ENCODE measurements at regions of chr10 and their contacts with region 1.

Region 1: DNA sequence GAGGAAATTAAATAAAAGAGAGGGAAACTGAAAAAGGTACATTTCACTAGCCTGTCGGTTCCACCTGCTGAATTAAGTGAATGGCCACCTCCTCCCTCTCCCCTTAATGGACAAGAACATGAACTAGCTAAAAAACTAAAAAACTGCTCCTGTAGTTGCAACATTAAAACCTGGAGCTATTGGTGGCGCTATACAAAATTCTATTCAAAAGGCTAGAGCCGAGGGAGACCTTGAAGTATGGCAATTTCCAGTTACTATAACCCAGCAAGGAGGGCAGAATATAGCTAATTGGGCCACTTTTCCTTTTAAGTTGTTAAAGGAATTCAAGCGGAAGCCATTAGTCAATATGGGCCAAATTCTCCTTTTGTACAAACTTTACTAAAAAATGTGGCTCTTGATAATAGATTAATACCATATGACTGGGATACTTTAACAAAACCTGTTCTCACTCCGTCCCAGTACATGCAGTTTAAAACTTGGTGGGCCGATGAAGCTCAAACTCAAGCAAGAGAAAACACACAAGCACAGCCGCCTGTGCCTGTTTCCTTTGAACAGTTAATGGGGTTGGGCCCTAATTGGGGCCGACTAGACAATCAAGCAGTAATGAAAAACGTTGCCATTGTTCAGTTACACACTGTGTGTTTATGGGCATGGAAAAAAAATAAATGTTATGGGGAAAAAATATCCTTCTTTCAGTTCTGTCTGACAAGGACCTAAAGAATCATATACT is 6.5 kb upstream of the CHST3 start:
- DNase-seq: no peak
- H3K4me3 ChIP-seq: no peak overlapping the region
- H3K27ac ChIP-seq: no peak overlapping the region
- H3K4me1 ChIP-seq: no peaks in the 10 kb centered on the region
- H3K27me3 ChIP-seq: no peaks in the 10 kb centered on the region
- CTCF ChIP-seq: no peak

Region 2: GRCh38 chr10:71812016-71812912 is 145.4 kb before region 1 on chr10:
- intact Hi-C with region 1: no loop called
- DNase-seq: peak; percentile 76
- H3K4me3 ChIP-seq: no peak overlapping the region
- H3K27ac ChIP-seq: no peak overlapping the region
- H3K4me1 ChIP-seq: no peaks in the 10 kb centered on the region
- H3K27me3 ChIP-seq: no peaks in the 10 kb centered on the region
- CTCF ChIP-seq: peak; percentile 95

Region 3: GRCh38 chr10:71899665-71900412 is 57.9 kb before region 1 on chr10:
- intact Hi-C with region 1: loop called (anchors 5 kb)
- DNase-seq: no peak
- H3K4me3 ChIP-seq: no peak overlapping the region
- H3K27ac ChIP-seq: no peak overlapping the region
- H3K4me1 ChIP-seq: no peaks in the 10 kb centered on the region
- H3K27me3 ChIP-seq: no peaks in the 10 kb centered on the region
- CTCF ChIP-seq: no peak

Measured in colonic mucosa (tissue), 4 donors.